Right ventricle myocardium superior (tissue), 1 donor: ENCODE measurements at regions of chr17 and their contacts with region 1.

Region 1: DNA sequence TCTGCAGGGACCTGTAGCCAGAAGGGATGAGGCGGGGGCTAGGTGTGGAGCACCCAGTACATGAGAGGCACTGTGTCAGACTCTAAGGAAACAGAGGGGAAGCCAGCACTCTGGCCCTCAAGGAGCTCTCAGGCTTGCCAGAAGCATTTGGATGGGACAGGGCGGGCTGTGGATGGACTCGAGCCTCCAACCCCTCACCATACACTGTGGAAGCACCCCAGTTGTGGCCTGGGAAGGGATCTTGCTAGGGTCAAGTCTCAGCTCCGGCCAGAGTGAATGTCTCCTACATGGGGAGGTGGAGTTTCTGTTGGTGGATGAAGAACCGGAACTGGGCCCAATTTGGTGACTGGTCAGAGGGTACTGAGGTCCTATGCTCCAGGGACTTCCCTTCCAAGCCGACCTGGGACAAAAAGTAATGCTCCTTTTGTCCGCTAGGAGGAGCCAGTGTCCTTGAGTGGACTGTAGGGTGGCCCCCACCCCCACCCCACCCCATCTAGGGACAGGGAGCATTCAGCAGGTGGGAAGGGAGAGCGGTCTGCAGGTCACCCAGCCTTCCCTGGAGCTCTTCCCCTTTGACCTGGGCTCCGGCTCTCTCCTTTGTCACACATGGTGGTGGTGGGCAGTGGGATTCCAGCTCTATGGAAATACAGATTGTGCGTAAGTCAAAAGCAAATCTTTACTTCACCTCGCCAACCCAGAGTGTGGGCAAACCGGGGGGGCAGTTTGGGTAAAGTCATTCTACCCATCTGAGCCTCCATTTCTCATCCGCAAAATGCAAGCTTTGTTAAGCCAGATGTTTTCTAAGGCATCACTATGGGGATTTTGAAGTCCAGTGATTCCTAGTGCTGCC is 20.4 kb upstream of the PHB1 start:
- DNase-seq: no peak
- ATAC-seq: peak; percentile 83

Region 2: GRCh38 chr17:48860034-48860433 is 575.0 kb before region 1 on chr17:
- intact Hi-C with region 1: no loop called
- DNase-seq: no peak
- ATAC-seq: no peak

Region 3: GRCh38 chr17:49239963-49240362 is 195.1 kb before region 1 on chr17:
- intact Hi-C with region 1: no loop called
- DNase-seq: no peak
- ATAC-seq: no peak

Region 4: DNA sequence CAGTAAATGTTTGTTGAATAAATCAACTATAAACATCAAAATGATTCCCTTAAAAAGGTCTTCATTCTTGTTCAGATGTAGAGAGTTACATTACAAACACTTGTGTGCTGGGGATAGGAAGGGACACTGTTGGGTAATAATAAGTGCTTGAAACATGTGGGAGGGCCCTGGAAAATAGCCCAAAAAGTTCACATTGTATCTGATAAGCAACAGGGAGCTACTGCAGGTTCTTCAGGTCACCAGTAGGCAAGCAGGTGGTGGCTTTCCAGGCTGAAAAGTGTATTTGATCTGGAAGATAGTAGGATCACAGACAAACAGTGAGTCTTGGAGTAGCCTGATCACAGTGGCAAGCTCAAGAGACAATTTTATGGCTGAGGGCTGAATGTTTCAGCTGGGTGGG is 54.0 kb before region 1 on chr17:
- intact Hi-C with region 1: no loop called
- DNase-seq: no peak
- ATAC-seq: no peak

Region 5: GRCh38 chr17:49548506-49549310 is 113.7 kb after region 1 on chr17:
- intact Hi-C with region 1: loop called (anchors 2 kb)
- DNase-seq: peak; percentile 79
- ATAC-seq: peak; percentile 78